ENCODE measurements at regions of chr9 and their contacts with region 1.

Region 1: GRCh38 chr9:130866474-130866965 is 30.1 kb downstream of the QRFP start:
- H3K4me3 ChIP-seq: peak overlapping the region; percentile 7; the same call in 1 of the 2 replicates
- H3K27ac ChIP-seq: no peak overlapping the region
- H3K4me1 ChIP-seq: no peaks in the 10 kb centered on the region
- CTCF ChIP-seq: peak; percentile 85

Region 2: GRCh38 chr9:130461218-130461630 is 405.3 kb before region 1 on chr9:
- CTCF ChIA-PET with region 1: interaction called, 10 read pairs
- POLR2A ChIA-PET with region 1: no interaction called
- H3K4me3 ChIP-seq: no peak overlapping the region
- H3K27ac ChIP-seq: no peak overlapping the region
- H3K4me1 ChIP-seq: no peaks in the 10 kb centered on the region
- CTCF ChIP-seq: peak; percentile 92

Region 3: GRCh38 chr9:130732131-130732530 is 134.4 kb before region 1 on chr9:
- CTCF ChIA-PET with region 1: interaction called, 11 read pairs
- POLR2A ChIA-PET with region 1: no interaction called
- H3K4me3 ChIP-seq: no peak overlapping the region
- H3K27ac ChIP-seq: no peak overlapping the region
- H3K4me1 ChIP-seq: no peaks in the 10 kb centered on the region
- CTCF ChIP-seq: no peak

Region 4: DNA sequence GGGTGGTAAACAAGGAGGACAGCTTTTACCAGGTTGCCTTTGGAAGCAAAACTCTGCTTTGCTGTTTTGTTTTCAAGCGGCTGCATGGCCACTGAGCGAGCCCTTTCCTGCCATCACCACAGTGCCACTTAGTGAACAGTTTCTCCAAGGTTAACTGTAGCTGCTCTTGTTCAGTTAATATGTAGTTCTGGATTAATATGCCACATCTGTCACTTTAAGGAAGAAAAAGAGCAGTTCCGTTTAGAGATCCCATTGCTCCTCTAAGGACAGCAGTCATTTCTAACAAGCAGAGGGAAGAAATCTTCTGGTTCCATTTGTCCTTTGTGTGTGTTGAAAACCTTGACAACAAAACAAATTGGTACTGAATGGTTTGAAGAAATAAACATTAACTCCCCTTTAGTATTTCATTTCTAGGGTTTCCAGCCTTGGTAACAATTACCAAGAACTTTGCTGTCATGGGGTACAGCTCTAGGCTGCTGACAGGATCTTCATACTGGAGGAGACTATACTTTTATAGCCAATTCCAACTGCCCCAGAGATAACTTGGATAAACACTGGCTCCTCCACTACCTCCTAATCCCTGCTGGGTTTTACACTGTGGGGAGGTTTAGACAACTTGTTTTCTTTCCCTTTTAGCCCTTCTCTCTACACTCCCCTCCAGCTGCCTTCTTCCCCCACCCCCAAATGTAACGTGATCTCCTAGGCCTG is 41.7 kb before region 1 on chr9:
- CTCF ChIA-PET with region 1: interaction called, 18 read pairs
- POLR2A ChIA-PET with region 1: no interaction called
- H3K4me3 ChIP-seq: no peak overlapping the region
- H3K27ac ChIP-seq: peak overlapping the region; percentile 42
- H3K4me1 ChIP-seq: no peaks in the 10 kb centered on the region
- CTCF ChIP-seq: no peak

Region 5: DNA sequence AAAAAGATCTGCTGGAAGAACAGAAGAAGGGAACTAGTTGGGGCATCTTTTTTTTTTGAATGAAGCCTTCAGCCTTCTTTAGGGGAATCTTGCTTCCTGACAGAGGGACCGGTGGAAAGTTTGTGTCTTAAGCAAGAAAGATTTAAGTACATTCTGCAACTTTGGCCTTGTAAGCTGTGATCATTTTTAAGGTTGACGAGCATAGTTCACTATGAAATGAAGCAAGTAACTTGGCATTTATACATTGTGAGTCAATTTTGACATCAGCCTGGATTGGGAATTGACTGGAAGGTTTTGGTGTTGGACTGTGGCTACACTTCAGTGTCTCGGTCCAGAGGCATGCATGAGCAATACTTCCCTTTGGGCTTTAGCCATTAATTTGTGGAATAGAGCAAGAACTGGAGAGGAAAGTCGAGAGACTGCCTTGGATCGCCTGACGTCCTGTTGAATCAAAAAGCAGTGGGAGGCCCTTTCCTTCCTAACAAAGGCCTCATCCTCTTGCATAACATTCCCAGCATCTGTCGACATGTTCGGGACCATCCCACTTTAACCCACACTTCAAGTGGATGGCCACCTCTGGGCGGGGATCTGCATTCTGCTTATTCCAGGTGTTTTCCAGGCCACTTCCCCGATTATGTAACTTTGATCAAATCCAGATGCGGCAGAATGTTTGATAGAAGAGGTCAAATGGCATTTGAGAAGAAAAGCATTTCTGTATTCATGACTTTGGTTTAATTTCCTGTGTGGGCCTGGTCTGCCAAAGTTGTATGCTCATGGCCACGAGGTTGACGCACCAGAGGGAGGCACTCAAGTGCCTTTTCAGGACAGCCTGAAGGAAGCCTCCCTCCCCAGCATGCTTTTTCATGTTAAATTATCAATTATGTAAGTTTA is 18.9 kb before region 1 on chr9:
- CTCF ChIA-PET with region 1: interaction called, 57 read pairs
- POLR2A ChIA-PET with region 1: no interaction called
- H3K4me3 ChIP-seq: no peak overlapping the region
- H3K27ac ChIP-seq: no peak overlapping the region
- H3K4me1 ChIP-seq: no peaks in the 10 kb centered on the region; the same call in 1 of the 2 replicates
- CTCF ChIP-seq: no peak

Region 6: GRCh38 chr9:130893341-130894101 is 27.0 kb after region 1 on chr9:
- CTCF ChIA-PET with region 1: interaction called, 31 read pairs
- POLR2A ChIA-PET with region 1: interaction called, 9 read pairs
- H3K4me3 ChIP-seq: no peak overlapping the region
- H3K27ac ChIP-seq: no peak overlapping the region
- H3K4me1 ChIP-seq: no peaks in the 10 kb centered on the region
- CTCF ChIP-seq: peak; percentile 53

Region 7: DNA sequence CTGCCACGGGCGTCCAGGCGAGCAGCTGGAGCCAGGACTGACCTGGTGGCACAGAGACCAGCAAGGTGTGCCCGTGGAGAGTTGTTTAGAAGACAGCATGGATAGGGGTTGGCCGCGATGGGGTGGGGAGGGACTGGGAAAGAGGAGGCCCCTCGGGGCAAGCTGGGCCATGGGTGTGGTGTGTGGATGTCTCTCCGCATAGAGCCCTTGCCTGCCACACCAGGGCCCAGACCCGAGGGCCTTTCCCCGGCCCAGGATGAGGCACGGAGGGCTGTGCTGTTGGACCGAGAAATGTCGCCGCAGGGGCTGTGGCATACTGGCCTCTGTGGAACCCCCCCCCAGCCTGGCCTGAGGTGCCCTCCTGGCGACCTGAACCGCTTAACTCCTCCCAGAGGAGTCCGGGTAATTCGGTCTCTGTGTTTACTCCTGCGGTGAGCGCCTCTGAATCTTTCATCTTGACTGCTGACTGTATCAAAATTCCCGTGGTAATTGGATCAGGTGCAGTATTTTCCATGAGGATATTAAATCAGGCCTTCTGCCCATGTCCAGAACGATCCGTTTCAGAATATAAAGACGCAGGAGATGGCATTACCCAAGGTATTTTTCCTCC is 119.9 kb after region 1 on chr9:
- CTCF ChIA-PET with region 1: interaction called, 12 read pairs
- POLR2A ChIA-PET with region 1: no interaction called
- H3K4me3 ChIP-seq: no peak overlapping the region
- H3K27ac ChIP-seq: no peak overlapping the region
- H3K4me1 ChIP-seq: no peaks in the 10 kb centered on the region
- CTCF ChIP-seq: no peak